PC-3 (cell line): ENCODE measurements at regions of chr2 and their contacts with region 1.

Region 1: DNA sequence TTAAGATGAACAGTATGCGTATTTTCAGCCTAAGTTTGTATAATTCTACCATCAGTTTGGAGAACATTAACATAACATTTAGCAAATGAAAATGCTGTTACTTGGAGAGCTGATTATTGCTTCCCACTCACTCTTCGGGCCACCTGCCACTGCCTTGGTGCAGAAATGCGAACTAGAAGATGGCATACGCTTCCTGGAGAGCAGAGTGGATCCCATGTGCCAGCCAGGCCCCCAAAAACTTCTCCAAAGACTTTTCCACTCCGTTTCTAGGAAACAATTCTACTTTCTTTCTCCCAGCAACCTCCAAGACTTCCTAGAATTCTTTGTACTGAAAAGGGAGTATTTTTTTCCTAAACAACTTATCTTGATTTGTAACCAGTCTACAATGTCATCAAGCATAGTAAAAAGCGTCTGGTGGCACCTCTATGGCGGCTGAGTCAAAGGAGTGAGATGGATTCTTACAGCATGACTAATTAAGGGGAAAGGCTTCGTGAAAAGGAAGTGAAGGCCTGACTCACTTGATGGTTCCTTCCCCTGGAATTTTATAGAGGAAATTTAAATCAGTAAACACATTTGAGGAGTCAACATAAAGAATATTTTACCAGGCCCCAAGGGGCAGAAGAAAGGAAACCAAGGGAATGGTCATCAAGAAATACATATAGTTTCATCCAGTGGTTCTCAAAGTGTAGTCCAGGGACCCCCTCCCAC is 36.6 kb downstream of the FEZ2 start:
- DNase-seq: peak; percentile 97
- ATAC-seq: peak; percentile 76
- H3K4me3 ChIP-seq: peak overlapping the region; percentile 45
- H3K27ac ChIP-seq: peak overlapping the region; percentile 93
- H3K4me1 ChIP-seq: peaks cover 86% of the 10 kb centered on the region
- H3K27me3 ChIP-seq: no peaks in the 10 kb centered on the region
- CTCF ChIP-seq: no peak

Region 2: GRCh38 chr2:36578343-36579280 is 17.2 kb after region 1 on chr2:
- CTCF ChIA-PET with region 1: no interaction called
- POLR2A ChIA-PET with region 1: interaction called, 5 read pairs
- intact Hi-C with region 1: loop called (anchors 1 kb)
- DNase-seq: peak; percentile 94
- ATAC-seq: peak; percentile 82
- H3K4me3 ChIP-seq: peak overlapping the region; percentile 60
- H3K27ac ChIP-seq: peak overlapping the region; percentile 76
- H3K4me1 ChIP-seq: peaks cover 30% of the 10 kb centered on the region
- H3K27me3 ChIP-seq: no peaks in the 10 kb centered on the region
- CTCF ChIP-seq: no peak